AG04450 (cell line): ENCODE measurements at regions of chr19 and their contacts with region 1.

Region 1: DNA sequence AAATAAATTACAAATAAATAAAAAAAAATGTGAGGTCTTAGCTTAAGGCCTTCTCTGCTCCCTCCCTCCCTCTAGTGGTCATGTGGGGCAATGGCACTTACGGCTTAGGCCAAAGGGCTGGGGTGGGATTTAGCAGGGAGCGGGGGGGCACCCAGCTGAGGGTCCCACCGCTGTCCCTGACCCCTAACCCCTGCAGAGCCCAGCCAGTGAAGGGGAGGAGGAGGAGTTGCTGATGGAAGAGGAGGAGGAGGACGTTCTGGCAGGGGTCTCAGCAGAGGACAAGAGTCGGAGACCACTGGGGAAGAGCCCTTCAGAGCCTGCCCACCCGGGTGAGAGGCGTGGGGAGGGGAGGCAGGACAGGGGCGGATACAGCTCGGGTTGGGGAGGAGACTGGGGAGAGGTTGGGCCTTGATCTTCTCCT is 9.3 kb downstream of the MPND start:
- DNase-seq: no peak
- H3K4me3 ChIP-seq: no peak overlapping the region
- H3K27ac ChIP-seq: no peak overlapping the region
- H3K27me3 ChIP-seq: no peaks in the 10 kb centered on the region
- CTCF ChIP-seq: peak; percentile 80

Region 2: DNA sequence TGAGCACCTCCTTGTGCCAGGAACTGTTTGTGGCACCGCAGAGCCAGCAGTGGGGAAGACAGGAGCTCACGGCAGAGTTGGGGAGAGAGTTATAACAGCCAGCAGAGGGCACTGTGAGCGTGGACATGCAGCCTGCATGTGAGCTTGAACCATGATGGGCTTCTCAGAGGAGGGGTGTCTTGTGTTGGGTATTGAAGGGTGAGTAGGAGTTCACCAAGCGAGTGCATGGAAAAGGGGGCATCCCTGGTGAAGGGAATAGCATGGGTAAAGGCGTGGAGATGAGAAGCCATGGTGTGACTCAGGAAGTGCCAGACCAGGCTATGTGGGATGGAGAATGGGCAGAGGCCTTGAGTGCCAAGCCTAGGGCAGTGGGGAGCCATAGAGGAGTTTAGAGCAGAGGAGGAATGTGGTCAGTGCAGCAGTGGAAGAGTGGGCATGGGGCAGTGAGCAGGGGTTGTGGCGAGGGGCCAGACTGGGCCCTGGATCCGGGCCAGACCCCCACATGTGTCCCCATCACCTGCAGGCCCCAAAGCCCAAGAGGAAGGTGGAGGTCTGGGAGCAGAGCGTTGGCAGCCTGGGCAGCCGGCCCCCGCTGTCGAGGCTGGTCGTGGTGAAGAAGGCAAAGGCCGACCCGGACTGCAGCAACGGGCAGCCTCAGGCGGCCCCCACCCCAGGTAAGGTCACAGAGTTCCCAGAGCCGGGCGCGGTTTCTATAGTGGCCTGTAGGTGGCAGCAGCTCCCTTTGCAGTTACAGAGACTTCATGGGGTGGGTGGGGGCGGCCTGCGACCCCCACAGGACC is 85.4 kb before region 1 on chr19:
- CTCF ChIA-PET with region 1: interaction called, 58 read pairs
- POLR2A ChIA-PET with region 1: interaction called, 7 read pairs
- DNase-seq: no peak
- H3K4me3 ChIP-seq: no peak overlapping the region
- H3K27ac ChIP-seq: no peak overlapping the region
- H3K27me3 ChIP-seq: no peaks in the 10 kb centered on the region
- CTCF ChIP-seq: peak; percentile 81

Region 3: DNA sequence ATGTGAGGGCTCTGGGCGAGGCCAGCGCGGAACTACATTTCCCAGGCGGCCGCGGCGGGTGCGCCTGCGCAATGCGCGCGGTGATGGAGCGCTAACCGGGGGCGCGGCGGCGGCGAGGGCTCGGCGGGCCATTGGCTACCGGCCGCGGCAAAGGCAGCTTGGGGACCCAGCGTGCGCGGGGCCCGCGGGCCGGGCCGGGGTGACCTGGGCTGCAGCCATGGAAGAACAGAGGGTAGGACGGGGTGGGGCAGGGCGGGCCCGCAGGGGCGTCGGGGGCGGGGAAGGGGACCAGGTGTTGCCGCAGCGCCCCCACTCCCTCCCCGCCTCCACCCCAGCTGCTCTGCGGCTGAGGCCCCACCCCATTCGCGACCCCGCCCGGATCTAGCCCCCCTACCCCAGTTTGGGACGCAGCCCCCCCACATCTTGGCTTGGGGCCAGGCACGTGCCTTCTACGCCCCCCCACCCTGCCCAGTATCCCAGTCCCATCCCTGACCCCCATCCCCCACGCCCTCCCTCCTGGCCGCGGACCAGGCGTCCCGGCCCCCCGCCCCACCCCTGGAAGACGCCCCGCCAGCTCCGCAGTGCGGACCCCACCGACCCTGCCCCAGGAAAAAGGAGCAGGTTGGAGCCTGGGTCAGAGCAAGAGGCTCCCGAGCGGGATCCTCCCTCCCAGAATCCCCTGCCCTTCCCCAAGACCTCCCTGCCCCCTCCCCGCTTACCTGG is 48.0 kb before region 1 on chr19 and contains the start of gene FSD1:
- CTCF ChIA-PET with region 1: no interaction called
- POLR2A ChIA-PET with region 1: no interaction called
- DNase-seq: no peak
- H3K4me3 ChIP-seq: peak within 1 kb of the TSS; percentile 55
- H3K27ac ChIP-seq: no peak within 1 kb of the TSS
- H3K27me3 ChIP-seq: no peaks in the 10 kb centered on the region
- CTCF ChIP-seq: no peak
- polyA plus RNA-seq, gene FSD1: 6.8 and 8.9 TPM in 2 replicates

Region 4: GRCh38 chr19:4362861-4363510 is 10.3 kb after region 1 on chr19:
- CTCF ChIA-PET with region 1: interaction called, 20 read pairs
- POLR2A ChIA-PET with region 1: no interaction called
- DNase-seq: no peak
- H3K4me3 ChIP-seq: no peak overlapping the region
- H3K27ac ChIP-seq: peak overlapping the region; percentile 11
- H3K27me3 ChIP-seq: no peaks in the 10 kb centered on the region
- CTCF ChIP-seq: peak; percentile 31